Ascending aorta (tissue), 2 donors: ENCODE measurements at regions of chr2 and their contacts with region 1.

Region 1: DNA sequence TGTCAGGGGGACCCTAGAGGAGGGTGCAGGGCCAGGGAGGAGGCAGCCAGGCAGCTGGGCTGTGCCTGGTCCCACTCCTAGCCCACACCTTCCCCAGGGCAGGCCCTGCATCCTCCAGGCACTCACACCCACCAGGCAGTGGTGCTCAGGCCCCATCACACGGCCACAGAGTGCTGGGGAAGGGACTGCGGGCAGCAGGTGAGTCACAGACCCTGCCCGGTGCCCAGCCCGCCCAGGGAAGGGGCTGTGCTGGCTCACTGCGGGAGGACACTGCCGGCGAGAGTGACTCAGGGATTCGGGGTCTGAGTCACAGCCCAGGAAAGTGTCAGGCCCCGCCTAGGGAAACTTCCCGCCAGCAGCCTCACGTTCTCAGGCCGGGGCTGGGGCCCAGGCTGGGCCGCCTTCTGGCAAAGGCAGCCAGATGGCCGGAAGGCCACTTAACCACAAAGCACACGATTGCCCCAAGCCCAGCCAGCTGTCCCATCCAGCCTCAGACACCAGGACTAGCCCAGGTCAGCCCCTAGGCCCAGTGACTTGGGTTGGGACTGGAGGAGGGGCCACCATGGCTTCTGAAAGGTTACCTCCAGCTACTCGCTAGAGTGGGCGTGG is 42.2 kb downstream of the BIN1 start:
- DNase-seq: peak; percentile 88 to 97
- H3K4me3 ChIP-seq: peak overlapping the region in 1 of 2 donors; percentile 25
- H3K27ac ChIP-seq: peak overlapping the region; percentile 70 to 82
- H3K4me1 ChIP-seq: peaks cover 9 to 16% of the 10 kb centered on the region in 2 donors
- H3K27me3 ChIP-seq: no peaks in the 10 kb centered on the region
- CTCF ChIP-seq: peak in 1 of 3 experiments; percentile 39

Region 2: DNA sequence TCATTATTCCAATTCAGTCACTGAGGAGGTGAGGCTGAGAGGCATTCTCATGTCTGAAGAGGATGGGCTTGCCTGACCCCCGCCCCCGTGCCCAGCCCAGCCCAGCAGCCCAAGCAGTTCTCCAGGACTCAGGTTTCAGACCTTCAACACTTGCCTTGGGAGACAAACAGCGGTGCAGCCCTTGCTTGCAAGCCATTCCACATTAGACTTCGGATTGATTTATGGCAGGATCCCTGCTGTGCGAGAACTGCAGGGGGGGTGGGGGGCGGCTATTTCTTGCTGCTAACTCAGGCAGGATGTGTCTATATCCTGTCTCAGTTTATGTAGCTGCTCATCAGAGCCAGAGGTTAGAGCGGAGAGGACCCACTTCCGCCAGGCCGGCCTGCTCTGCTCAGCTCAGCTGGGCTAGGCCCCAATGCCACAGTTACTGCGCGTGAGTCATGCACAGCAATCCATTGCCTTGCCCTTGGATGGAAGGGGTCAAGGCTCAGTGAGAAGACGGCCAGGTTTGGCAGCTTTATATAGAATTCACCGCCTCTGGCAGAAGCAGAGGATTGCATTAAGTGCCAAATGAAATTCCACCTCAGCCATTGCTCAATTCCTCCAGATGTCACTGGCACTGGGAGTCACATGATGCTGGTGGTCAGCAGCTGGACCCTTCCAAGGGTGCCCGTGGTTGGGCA is 407.0 kb before region 1 on chr2:
- intact Hi-C with region 1: loop called (anchors 10 kb)
- DNase-seq: peak; percentile 68 to 95
- H3K4me3 ChIP-seq: peak overlapping the region; percentile 79 to 90
- H3K27ac ChIP-seq: peak overlapping the region; percentile 98 to 99
- H3K4me1 ChIP-seq: peaks cover 20 to 53% of the 10 kb centered on the region in 2 donors
- H3K27me3 ChIP-seq: no peaks in the 10 kb centered on the region
- CTCF ChIP-seq: peak in 1 of 3 experiments; percentile 4

Region 3: DNA sequence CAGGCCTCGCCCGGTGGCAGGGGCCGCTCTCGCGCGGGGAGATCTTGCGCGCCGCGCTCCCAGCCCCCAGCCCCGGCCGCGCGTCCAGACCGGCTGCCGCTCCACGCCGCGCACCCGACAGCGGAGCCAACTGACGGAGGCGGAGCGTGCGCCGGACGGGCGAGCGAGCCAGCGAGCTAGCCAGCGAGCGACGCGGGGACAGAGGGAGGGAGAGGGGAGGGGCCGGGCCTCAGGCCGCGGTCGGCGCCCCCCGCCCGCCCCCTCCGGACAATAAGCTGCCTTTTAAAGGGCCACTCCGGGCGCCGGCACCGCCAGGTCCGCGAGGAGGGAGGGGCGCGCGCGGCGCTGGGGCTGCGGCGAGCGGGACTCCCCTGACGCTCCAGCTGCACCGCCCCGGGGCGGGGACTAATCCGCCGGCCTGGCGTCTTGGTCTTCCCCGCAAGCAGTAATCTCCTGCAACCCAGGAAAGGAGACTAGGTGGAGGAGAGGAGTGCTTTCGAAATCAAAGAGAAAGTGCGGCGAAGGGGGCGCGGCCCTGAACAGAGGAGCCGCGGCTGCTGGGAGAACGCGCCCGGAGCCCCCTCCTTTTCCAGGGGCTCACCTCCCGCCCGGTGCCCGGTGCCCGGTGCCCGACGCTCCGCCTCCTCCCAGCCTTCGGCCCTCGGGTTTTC is 42.3 kb after region 1 on chr2 and contains the start of gene BIN1:
- intact Hi-C with region 1: loop called (anchors 1 kb)
- DNase-seq: peak; percentile 48 to 84
- H3K4me3 ChIP-seq: peak within 1 kb of the TSS; percentile 74 to 78
- H3K27ac ChIP-seq: peak within 1 kb of the TSS; percentile 64 to 67
- H3K4me1 ChIP-seq: no peaks in the 10 kb centered on the region
- H3K27me3 ChIP-seq: no peaks in the 10 kb centered on the region
- CTCF ChIP-seq: no peak
- total RNA-seq, gene BIN1: 71.6 TPM

Region 4: GRCh38 chr2:127293748-127294562 is 229.2 kb after region 1 on chr2 and contains the start of gene ERCC3:
- intact Hi-C with region 1: loop called (anchors 10 kb)
- DNase-seq: peak in 1 of 2 donors; percentile 90
- H3K4me3 ChIP-seq: peak within 1 kb of the TSS; percentile 83 to 91
- H3K27ac ChIP-seq: peak within 1 kb of the TSS; percentile 79 to 80
- H3K4me1 ChIP-seq: peaks cover 5 to 10% of the 10 kb centered on the region in 2 donors
- H3K27me3 ChIP-seq: no peaks in the 10 kb centered on the region
- CTCF ChIP-seq: no peak
- total RNA-seq, gene ERCC3: 35.3 TPM

Region 5: GRCh38 chr2:127735537-127736399 is 671.0 kb after region 1 on chr2:
- intact Hi-C with region 1: no loop called
- DNase-seq: no peak
- H3K4me3 ChIP-seq: no peak overlapping the region
- H3K27ac ChIP-seq: no peak overlapping the region
- H3K4me1 ChIP-seq: peaks cover 2 to 8% of the 10 kb centered on the region in 2 donors
- H3K27me3 ChIP-seq: no peaks in the 10 kb centered on the region
- CTCF ChIP-seq: no peak